Left cardiac atrium (tissue), 4 donors: ENCODE measurements at regions of chr22 and their contacts with region 1.

Region 1: DNA sequence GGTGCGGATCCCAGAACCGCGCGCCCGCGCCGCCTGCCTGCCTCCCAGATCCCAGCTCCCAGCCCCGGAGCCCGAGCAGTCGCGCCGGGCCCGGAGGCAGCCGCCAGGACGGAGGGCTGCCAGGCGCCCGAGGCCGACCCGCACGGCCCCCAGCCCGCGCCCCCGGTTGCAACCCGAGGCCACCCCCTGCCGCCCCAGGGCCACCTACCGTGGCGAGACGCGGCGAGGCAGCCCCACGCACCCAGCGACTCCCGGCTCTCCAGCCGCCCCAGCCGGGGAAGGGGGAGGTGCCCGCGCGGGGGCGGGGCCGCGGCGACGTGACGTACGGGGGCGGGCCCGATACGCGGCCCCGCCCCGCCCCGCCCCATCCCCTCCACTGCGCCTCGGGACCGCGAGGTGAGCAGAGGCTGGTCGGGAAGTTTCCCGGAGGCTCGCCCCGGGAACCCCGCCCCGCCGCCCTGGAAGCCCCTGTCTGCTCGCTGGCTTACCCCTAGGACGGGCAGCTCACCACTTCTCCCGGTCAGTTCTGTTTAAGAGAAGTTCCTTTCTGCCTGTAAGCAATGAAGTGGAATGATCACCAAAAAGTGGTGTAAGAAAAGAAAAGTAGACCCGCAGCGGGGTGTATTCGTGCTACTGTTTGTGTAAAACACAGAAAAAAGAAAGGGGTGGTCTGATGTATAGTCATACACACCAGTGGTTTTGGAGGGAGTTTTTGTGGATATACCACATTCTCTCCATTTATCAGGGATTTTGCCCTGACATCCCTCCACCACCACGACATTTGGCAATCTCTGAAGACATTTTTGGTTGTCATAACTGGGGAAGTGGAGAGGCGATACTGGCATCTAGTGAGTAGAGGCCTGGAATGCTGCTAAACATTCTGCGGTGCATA is at the start of gene TPST2:
- DNase-seq: peak; percentile 84
- ATAC-seq: peak; percentile 95 to 96
- total RNA-seq, gene TPST2: 22.1 to 36.5 TPM

Region 2: GRCh38 chr22:26511857-26512793 is 78.0 kb before region 1 on chr22 and contains the start of gene TFIP11:
- intact Hi-C with region 1: loop called (anchors 5 to 10 kb)
- DNase-seq: peak; percentile 96
- ATAC-seq: peak; percentile 100
- total RNA-seq, gene TFIP11: 19.9 to 20.4 TPM